ENCODE measurements at regions of chr6 and their contacts with region 1.

Region 1: DNA sequence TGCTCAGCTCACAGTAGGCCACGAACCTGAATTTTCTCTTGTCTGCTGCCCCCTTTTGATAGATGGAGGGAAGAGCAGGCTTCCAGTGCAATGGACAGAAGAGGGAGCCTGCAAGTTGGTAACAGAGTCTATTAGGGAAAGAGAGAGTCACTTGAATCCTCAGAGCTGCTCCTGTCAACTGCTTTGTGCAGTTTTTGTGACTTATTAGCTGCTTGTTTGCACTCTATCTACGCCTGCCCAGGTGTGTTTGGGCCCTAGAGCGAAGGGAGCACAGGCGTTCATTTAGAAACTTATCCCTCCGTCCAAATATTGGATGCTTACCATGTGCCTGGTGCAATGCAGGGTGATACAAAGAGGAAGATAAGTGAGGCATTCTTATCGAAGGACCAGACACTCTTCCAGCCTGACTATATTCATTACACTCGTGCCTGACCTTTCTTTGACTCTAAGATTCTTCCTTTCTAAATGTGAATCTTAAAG is 11.6 kb upstream of the SLC2A12 start:
- DNase-seq: peak; percentile 70 to 82
- H3K4me3 ChIP-seq: no peak overlapping the region
- H3K27ac ChIP-seq: peak overlapping the region; percentile 53 to 66
- H3K4me1 ChIP-seq: peaks cover 0 to 34% (median 13%) of the 10 kb centered on the region in 4 donors
- H3K27me3 ChIP-seq: no peaks in the 10 kb centered on the region
- CTCF ChIP-seq: peak; percentile 86 to 89

Region 2: DNA sequence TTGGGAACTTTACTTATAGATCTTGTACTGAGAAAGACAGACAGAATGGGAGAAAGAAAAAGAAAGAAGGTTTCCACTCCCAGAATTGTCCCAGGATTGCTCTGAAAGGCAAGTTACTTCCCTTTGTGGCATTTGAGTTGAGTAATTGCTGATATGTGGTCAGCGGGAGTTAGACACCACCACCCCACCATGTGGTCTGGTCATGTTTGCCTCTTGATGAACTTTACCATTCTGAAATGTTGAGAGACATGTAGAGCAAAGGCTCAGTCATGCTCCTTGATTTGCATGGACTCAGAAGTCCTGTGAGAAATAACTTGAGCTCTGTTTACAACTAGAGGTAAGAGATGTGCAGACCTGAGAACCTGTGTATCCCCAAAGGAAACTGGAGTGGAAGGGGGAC is 158.0 kb before region 1 on chr6:
- intact Hi-C with region 1: no loop called
- DNase-seq: no peak
- H3K4me3 ChIP-seq: no peak overlapping the region
- H3K27ac ChIP-seq: no peak overlapping the region
- H3K4me1 ChIP-seq: no peaks in the 10 kb centered on the region
- H3K27me3 ChIP-seq: peaks cover 0 to 7% of the 10 kb centered on the region in 2 donors
- CTCF ChIP-seq: no peak

Region 3: DNA sequence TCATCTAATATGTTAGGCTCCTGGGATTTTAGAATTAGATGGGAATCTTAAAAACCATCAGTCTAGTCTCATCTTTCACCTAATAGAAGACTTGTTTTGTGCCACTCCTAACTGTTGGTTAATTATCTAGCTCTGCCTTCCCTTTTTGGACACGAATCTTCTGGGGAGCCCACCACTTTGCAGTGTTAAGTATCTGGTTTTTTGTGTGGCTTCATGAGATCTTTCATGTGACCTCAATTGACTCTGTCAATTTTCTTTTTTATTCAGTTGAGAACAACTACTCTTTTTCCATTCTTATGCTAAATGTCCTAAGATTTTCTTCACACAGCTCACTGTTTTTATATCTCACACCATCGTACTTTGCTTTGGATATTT is 94.1 kb before region 1 on chr6:
- intact Hi-C with region 1: loop called (anchors 2 kb)
- DNase-seq: no peak
- H3K4me3 ChIP-seq: no peak overlapping the region
- H3K27ac ChIP-seq: no peak overlapping the region
- H3K4me1 ChIP-seq: peaks cover 0 to 56% (median 4%) of the 10 kb centered on the region in 4 donors
- H3K27me3 ChIP-seq: no peaks in the 10 kb centered on the region
- CTCF ChIP-seq: no peak

Measured in tibial artery (tissue), 4 donors.